CD8-positive, alpha-beta memory T cell (primary cell): ENCODE measurements at regions of chr19 and their contacts with region 1.

Region 1: GRCh38 chr19:16247353-16248182 is 49.9 kb downstream of the AP1M1 start:
- DNase-seq: peak; percentile 63 to 86 (median 78)
- H3K4me3 ChIP-seq: no peak overlapping the region
- H3K4me3 Mint-ChIP-seq: peak overlapping the region in 5 of 7 donors; percentile 11 to 70 (median 41)
- H3K27ac ChIP-seq: no peak overlapping the region
- H3K27ac Mint-ChIP-seq: peak overlapping the region in 5 of 8 donors; percentile 43 to 89 (median 87)
- H3K4me1 ChIP-seq: peaks cover 28% of the 10 kb centered on the region
- H3K4me1 Mint-ChIP-seq: peaks cover 16 to 23% (median 17%) of the 10 kb centered on the region in 3 donors
- H3K27me3 ChIP-seq: no peaks in the 10 kb centered on the region
- H3K27me3 Mint-ChIP-seq: peaks cover 3 to 5% of the 10 kb centered on the region in 2 donors

Region 2: DNA sequence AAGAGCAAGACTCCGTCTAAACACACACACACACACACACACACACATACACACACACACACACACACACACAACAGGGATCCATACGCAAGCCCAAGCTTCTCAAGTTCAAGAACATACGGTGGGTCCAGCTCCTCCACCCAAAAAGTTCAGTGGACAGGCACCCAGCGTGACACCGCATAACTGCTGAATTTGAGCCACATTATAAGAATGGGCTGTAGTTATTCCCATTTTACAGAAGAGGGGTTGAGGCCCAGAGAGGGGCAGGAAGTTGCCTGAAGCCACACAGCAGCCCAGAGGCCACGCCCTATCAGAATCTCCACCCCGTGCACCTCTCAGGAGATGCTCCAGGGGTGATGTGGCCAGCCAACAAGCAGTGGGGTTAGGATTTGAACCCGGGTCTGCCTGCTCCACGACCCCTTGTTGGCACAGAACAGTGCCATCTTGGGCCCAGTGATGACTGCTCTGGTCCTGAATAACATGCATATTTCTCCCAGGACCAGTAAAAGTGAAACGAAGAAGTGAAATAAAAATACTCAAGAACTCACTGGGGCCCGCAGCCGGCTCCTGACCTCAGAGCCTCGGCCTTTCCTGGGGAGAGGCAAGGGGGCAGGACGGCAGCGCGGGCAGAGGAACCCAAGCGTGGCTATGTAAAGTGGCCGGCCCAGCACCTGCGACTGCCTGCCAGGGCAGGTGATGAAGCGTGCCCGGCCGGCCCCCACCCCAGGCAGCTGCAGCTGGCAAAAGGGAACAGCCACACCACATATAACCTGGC is 12.0 kb after region 1 on chr19:
- CTCF ChIA-PET with region 1: interaction called, 23 read pairs
- POLR2A ChIA-PET with region 1: interaction called, 5 read pairs
- DNase-seq: no peak
- H3K4me3 ChIP-seq: no peak overlapping the region
- H3K4me3 Mint-ChIP-seq: peak overlapping the region in 3 of 7 donors; percentile 12 to 46 (median 20)
- H3K27ac ChIP-seq: no peak overlapping the region
- H3K27ac Mint-ChIP-seq: peak overlapping the region in 3 of 8 donors; percentile 8 to 54 (median 27)
- H3K4me1 ChIP-seq: peaks cover 64% of the 10 kb centered on the region
- H3K4me1 Mint-ChIP-seq: peaks cover 44 to 63% (median 55%) of the 10 kb centered on the region in 3 donors
- H3K27me3 ChIP-seq: no peaks in the 10 kb centered on the region
- H3K27me3 Mint-ChIP-seq: peaks cover 0 to 2% of the 10 kb centered on the region in 2 donors

Region 3: DNA sequence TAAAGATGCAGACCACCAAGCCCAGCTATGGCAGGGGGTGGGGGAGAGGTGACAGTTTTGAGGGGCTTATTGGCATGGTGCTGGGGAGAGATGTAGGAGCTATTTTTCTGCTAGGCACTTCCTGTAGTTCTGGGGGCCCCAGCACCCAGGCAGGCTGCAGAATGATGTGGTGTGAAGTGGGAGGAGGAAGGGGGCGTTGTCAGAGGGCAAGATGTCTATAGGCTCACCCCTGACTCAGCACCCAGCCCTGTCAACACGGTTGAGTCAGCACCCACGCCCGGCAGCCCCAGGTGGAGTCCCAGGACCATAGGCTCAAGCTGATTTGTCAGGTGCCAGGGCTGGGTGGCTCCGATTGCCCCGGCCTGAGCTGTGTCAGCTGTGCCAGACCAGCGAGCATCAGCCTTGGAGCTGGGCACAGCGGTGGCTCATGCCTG is 82.8 kb after region 1 on chr19:
- CTCF ChIA-PET with region 1: interaction called, 62 read pairs
- POLR2A ChIA-PET with region 1: interaction called, 20 read pairs
- DNase-seq: peak; percentile 92 to 98 (median 92)
- H3K4me3 ChIP-seq: peak overlapping the region; percentile 29
- H3K4me3 Mint-ChIP-seq: peak overlapping the region; percentile 90 to 100 (median 100)
- H3K27ac ChIP-seq: peak overlapping the region; percentile 100
- H3K27ac Mint-ChIP-seq: peak overlapping the region; percentile 90 to 99 (median 98)
- H3K4me1 ChIP-seq: peaks cover 39% of the 10 kb centered on the region
- H3K4me1 Mint-ChIP-seq: peaks cover 49 to 62% (median 52%) of the 10 kb centered on the region in 3 donors
- H3K27me3 ChIP-seq: no peaks in the 10 kb centered on the region
- H3K27me3 Mint-ChIP-seq: peaks cover 0 to 36% of the 10 kb centered on the region in 2 donors

Region 4: DNA sequence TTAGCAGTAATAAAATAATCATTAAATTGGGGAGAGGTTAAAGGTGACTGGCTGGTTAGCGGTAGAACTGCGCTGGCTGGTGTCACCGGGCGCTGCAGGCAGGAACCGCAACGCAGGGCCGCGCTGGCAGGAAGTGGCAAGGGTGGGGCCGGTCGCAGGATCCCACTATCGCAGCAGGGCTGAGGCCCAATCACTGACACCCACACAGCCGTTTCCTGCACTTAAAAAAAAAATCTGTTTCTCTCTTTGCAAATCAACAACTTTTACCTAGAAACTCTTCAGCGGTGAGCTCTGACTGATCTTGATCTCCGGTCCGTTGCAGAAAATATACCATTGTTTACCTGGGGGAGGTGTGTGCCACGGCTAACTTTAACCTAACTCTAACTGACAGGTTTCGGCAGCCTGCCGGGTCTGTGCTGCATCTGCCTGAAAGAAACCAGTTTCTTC is 124.0 kb after region 1 on chr19:
- CTCF ChIA-PET with region 1: interaction called, 61 read pairs
- POLR2A ChIA-PET with region 1: interaction called, 7 read pairs
- DNase-seq: peak; percentile 86 to 97 (median 96)
- H3K4me3 ChIP-seq: peak overlapping the region; percentile 46
- H3K4me3 Mint-ChIP-seq: no peak overlapping the region
- H3K27ac ChIP-seq: peak overlapping the region; percentile 84
- H3K27ac Mint-ChIP-seq: no peak overlapping the region
- H3K4me1 ChIP-seq: peaks cover 96% of the 10 kb centered on the region
- H3K4me1 Mint-ChIP-seq: peaks cover 0 to 43% (median 33%) of the 10 kb centered on the region in 3 donors
- H3K27me3 ChIP-seq: no peaks in the 10 kb centered on the region
- H3K27me3 Mint-ChIP-seq: peaks cover 0 to 7% of the 10 kb centered on the region in 2 donors

Region 5: DNA sequence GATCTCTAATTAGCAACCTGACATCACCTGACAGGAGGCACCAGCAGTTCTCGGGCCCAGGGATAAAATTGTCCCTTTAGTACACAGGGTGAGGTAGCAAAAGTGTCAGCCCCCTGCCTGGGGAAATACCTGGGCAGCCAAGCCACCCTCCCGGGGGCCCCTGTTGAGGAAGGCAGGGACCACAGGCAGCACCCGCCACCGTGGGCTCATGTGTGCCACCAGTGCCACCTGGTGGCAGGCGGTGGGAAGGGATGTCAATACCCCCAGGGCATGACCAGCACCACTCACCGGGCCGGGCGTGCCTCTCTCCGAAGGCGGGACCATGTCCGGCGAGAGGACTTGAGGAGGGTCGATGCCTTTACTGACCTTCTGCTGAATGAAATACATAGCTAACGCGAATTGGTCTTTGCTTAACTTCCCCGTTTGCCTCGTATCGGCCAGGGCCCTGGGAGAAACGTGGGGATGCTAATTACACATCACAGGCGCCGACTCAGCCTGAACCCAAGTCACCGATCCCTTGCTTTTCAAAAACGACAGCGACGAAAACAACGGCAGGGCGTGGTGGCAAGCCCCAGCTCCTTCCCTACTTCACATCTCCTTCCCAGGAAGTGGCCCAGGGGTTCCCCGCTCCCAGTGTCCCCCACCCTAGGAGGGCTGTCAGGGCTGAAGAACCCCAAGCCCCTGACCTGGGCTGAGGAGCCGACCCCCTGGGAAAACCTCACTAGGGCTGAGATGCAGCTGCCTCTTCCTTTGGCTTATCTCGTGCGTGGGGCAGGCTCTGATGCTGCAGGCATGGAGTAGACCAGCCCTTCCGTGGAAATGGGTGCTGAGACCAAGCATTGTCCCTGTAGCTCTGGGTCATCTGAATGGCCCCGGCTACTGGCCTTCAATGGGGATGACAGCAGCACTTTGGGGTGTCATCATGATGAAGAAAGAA is 170.4 kb after region 1 on chr19:
- CTCF ChIA-PET with region 1: interaction called, 21 read pairs
- POLR2A ChIA-PET with region 1: no interaction called
- DNase-seq: peak; percentile 40 to 78 (median 56)
- H3K4me3 ChIP-seq: no peak overlapping the region
- H3K4me3 Mint-ChIP-seq: no peak overlapping the region
- H3K27ac ChIP-seq: no peak overlapping the region
- H3K27ac Mint-ChIP-seq: peak overlapping the region in 4 of 8 donors; percentile 57 to 79 (median 70)
- H3K4me1 ChIP-seq: peaks cover 7% of the 10 kb centered on the region
- H3K4me1 Mint-ChIP-seq: peaks cover 0 to 9% (median 8%) of the 10 kb centered on the region in 3 donors
- H3K27me3 ChIP-seq: no peaks in the 10 kb centered on the region
- H3K27me3 Mint-ChIP-seq: peaks cover 0 to 3% of the 10 kb centered on the region in 2 donors

Region 6: GRCh38 chr19:16542045-16542909 is 294.7 kb after region 1 on chr19 and contains the start of gene CHERP:
- CTCF ChIA-PET with region 1: no interaction called
- POLR2A ChIA-PET with region 1: no interaction called
- DNase-seq: peak; percentile 93 to 97 (median 94)
- H3K4me3 ChIP-seq: peak within 1 kb of the TSS; percentile 99
- H3K4me3 Mint-ChIP-seq: peak within 1 kb of the TSS; percentile 85 to 98 (median 91)
- H3K27ac ChIP-seq: peak within 1 kb of the TSS; percentile 95
- H3K27ac Mint-ChIP-seq: peak within 1 kb of the TSS; percentile 78 to 96 (median 94)
- H3K4me1 ChIP-seq: peaks cover 36% of the 10 kb centered on the region
- H3K4me1 Mint-ChIP-seq: peaks cover 43 to 61% (median 54%) of the 10 kb centered on the region in 3 donors
- H3K27me3 ChIP-seq: no peaks in the 10 kb centered on the region
- H3K27me3 Mint-ChIP-seq: no peaks in the 10 kb centered on the region
- total RNA-seq, gene CHERP: 73.1 to 74.2 TPM